ENCODE measurements at regions of chr4 and their contacts with region 1.

Region 1: GRCh38 chr4:34720571-34720970 is 1523.7 kb downstream of the ARAP2 start:
- DNase-seq: no peak
- ATAC-seq: peak in 2 of 4 donors; percentile 59 to 66
- H3K4me3 ChIP-seq: no peak overlapping the region
- H3K27ac ChIP-seq: no peak overlapping the region
- H3K4me1 ChIP-seq: no peaks in the 10 kb centered on the region
- H3K27me3 ChIP-seq: no peaks in the 10 kb centered on the region
- CTCF ChIP-seq: peak; percentile 47

Region 2: DNA sequence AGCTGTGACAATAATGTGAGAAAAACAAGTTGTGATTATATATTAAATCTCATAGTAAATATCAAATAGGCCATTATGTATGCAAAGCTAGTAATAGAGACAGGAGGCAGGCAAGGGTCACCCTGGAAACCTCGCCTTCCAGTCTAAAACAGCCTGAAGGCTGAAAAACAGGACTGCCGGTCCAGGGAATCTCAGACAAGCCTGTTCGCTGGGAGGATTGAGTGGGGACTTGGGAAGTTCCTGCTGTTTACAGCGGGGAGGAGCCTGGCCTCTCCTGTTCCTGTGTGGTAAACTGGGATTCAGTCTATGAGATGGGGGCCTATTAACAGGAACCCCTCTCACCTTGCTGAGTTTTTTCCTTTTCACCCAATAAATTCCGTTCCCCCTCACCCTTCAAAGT is 1683.1 kb before region 1 on chr4:
- intact Hi-C with region 1: loop called in 1 of 2 experiments (anchors 5 kb)
- DNase-seq: no peak
- ATAC-seq: no peak
- H3K4me3 ChIP-seq: no peak overlapping the region
- H3K27ac ChIP-seq: no peak overlapping the region
- H3K4me1 ChIP-seq: no peaks in the 10 kb centered on the region
- H3K27me3 ChIP-seq: no peaks in the 10 kb centered on the region
- CTCF ChIP-seq: no peak

Region 3: GRCh38 chr4:34676390-34676789 is 44.2 kb before region 1 on chr4:
- intact Hi-C with region 1: no loop called
- DNase-seq: no peak
- ATAC-seq: no peak
- H3K4me3 ChIP-seq: no peak overlapping the region
- H3K27ac ChIP-seq: no peak overlapping the region
- H3K4me1 ChIP-seq: no peaks in the 10 kb centered on the region
- H3K27me3 ChIP-seq: no peaks in the 10 kb centered on the region
- CTCF ChIP-seq: no peak

Region 4: GRCh38 chr4:35025152-35025834 is 304.7 kb after region 1 on chr4:
- intact Hi-C with region 1: no loop called
- DNase-seq: no peak
- ATAC-seq: no peak
- H3K4me3 ChIP-seq: no peak overlapping the region
- H3K27ac ChIP-seq: no peak overlapping the region
- H3K4me1 ChIP-seq: no peaks in the 10 kb centered on the region
- H3K27me3 ChIP-seq: no peaks in the 10 kb centered on the region
- CTCF ChIP-seq: no peak

Measured in psoas muscle (tissue), 8 donors.